Gastrocnemius medialis (tissue), 4 donors: ENCODE measurements at regions of chr19 and their contacts with region 1.

Region 1: GRCh38 chr19:7098701-7099596 is 29.4 kb downstream of the ZNF557 start:
- DNase-seq: peak; percentile 84 to 89
- ATAC-seq: peak; percentile 94 to 95
- H3K4me3 ChIP-seq: peak overlapping the region; percentile 73 to 92 (median 78)
- H3K27ac ChIP-seq: peak overlapping the region; percentile 92 to 99 (median 94)
- H3K4me1 ChIP-seq: peaks cover 0 to 9% of the 10 kb centered on the region in 2 donors
- H3K27me3 ChIP-seq: no peaks in the 10 kb centered on the region
- CTCF ChIP-seq: no peak
- POLR2A ChIP-seq: no peak

Region 2: DNA sequence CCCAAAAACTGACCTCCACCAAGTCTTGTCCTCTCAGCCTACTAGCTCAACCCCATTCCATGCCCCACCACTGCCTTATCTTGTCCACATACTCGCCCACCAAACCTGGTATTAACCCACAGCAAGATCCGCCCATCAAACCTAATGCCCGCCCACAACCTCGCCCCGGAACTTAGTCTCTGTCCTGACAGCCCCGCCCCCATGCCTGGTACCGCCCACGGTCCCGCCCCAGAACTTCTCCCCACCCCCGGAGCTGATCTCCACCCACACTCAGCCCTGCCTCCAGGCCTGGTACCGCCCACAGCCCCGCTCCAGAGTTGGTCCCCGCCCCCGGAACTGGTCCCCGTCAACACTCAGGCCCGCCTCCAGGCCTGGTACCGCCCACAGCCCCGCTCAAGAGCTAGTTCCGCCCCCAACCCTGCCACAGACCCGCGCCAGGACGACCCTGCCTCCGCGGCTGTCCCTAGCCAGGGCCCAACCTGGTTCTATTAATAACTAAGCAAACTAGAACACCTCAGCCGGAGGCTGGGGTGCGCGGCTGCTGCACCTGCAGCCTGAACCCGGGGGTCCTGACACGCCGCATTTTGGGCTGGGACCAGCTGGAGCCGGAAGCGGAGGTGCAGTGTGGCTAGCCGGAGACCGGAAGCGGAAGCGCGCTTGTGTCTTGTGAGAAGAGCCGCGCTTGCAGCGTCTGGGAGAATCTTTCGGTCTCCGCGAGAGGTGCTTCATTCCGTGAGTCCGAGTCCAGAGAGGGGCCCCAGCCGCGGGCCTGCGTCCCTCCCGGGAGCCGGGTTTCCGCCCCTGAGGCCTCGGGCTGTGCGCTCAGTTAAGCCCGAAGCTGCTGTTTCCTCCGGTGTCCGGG is 29.7 kb before region 1 on chr19 and contains the start of gene ZNF557:
- in situ Hi-C with region 1: no loop called
- intact Hi-C with region 1: loop called (anchors 1 kb)
- DNase-seq: peak; percentile 98
- ATAC-seq: peak; percentile 97
- H3K4me3 ChIP-seq: peak within 1 kb of the TSS; percentile 82 to 99 (median 96)
- H3K27ac ChIP-seq: peak within 1 kb of the TSS; percentile 75 to 88 (median 83)
- H3K4me1 ChIP-seq: peaks cover 7 to 9% of the 10 kb centered on the region in 2 donors
- H3K27me3 ChIP-seq: no peaks in the 10 kb centered on the region
- CTCF ChIP-seq: no peak
- POLR2A ChIP-seq: peak; percentile 53 to 75
- total RNA-seq, gene ZNF557: 3.9 to 5.3 (median 4.3) TPM

Region 3: GRCh38 chr19:7522072-7522922 is 423.3 kb after region 1 on chr19 and contains the start of gene MCOLN1:
- in situ Hi-C with region 1: no loop called
- intact Hi-C with region 1: loop called (anchors 1 kb)
- DNase-seq: peak; percentile 99
- ATAC-seq: peak; percentile 92 to 93
- H3K4me3 ChIP-seq: peak within 1 kb of the TSS; percentile 67 to 95 (median 85)
- H3K27ac ChIP-seq: peak within 1 kb of the TSS; percentile 48 to 84 (median 70)
- H3K4me1 ChIP-seq: peaks cover 15 to 19% of the 10 kb centered on the region in 2 donors
- H3K27me3 ChIP-seq: no peaks in the 10 kb centered on the region
- CTCF ChIP-seq: peak in 2 of 5 experiments; percentile 66 to 73
- POLR2A ChIP-seq: peak; percentile 52 to 71
- total RNA-seq, gene MCOLN1: 9.2 to 13.6 (median 11.5) TPM